BJ (cell line): ENCODE measurements at regions of chr1 and their contacts with region 1.

Region 1: GRCh38 chr1:151085953-151086559 is 15.5 kb downstream of the GABPB2 start:
- DNase-seq: no peak
- H3K4me3 ChIP-seq: no peak overlapping the region
- H3K27me3 ChIP-seq: no peaks in the 10 kb centered on the region
- CTCF ChIP-seq: no peak

Region 2: DNA sequence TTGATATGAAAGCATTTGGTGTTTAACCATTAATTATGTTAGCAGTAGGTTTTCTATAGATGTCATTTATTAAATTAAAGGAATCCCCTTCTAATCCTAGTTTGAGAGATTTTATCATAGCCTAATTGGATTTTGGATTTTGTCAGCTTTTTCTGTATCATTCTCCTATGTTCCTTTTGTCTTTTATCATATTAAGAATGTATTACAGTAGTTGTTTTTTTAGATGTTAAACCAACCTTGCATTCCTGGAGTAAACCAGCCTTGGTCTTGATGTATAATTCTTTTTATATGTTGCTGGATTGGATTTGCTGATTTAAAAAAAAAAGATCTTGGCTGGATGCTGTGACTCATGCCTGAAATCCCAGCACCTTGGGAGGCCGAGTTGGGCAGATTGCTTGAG is 154.3 kb before region 1 on chr1:
- CTCF ChIA-PET with region 1: no interaction called
- POLR2A ChIA-PET with region 1: no interaction called
- DNase-seq: no peak
- H3K4me3 ChIP-seq: no peak overlapping the region
- H3K27me3 ChIP-seq: no peaks in the 10 kb centered on the region
- CTCF ChIP-seq: no peak

Region 3: DNA sequence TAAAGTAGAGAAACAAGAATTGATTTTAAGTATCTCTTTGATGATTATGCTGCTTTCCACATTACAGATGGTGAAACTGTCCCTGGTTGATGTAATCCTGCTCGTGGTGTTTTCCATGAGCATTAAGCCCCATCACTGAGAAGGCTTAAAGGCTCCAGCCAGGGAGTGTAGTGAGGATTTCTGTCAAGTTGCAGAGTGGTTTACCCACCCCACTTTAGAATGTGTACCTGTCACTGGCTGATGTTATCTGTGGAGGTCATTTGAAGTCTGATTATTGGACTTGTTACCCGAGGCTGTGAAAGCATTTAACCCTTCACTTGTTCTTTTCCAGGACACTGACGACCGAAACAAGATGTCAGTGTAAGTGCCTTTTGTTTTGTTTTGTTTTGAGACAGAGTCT is 124.3 kb before region 1 on chr1:
- CTCF ChIA-PET with region 1: no interaction called
- POLR2A ChIA-PET with region 1: no interaction called
- DNase-seq: no peak
- H3K4me3 ChIP-seq: no peak overlapping the region
- H3K27me3 ChIP-seq: no peaks in the 10 kb centered on the region
- CTCF ChIP-seq: no peak

Region 4: DNA sequence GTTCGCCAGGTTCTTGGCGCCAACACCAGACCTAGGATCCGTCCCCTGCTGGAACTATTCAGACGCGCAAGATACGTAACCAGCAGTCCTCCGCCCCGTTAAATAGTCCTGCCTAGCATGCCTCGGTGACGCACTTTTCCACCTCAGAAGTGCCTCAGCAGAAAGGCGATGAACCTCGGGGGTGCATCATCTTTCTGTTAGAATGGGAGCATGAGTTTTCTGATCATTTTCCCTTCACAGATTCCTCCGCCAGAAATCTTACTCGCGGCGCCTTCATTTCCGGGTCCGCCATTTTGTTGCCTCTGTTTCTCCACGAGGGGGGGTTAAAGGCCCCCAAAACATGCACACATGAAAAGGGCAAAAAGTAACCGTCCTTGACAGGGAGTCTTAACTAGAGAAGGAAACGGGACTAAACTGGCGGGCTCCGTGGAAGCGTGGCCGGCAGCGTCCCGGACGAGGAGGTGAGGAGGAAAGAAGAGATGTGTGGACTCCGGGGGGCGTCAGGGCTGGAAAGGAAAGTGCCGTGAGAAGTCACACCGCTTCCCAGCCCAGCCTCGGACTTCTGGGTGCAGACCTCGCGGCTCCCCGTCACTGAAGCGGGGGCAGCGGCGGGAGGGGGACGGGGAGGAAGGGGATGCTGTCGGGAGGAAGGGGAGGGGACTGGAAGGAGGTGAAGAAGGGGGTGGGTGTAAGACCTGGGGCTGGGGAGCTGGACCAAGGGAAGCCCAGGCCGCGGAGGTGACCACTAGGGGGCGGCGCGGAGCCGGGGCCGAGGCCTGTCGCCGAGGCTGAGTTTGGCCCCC is 15.4 kb before region 1 on chr1 and contains the start of gene GABPB2:
- CTCF ChIA-PET with region 1: interaction called, 18 read pairs
- POLR2A ChIA-PET with region 1: no interaction called
- DNase-seq: peak; percentile 69
- H3K4me3 ChIP-seq: peak within 1 kb of the TSS; percentile 94
- H3K27me3 ChIP-seq: no peaks in the 10 kb centered on the region
- CTCF ChIP-seq: peak; percentile 99
- polyA plus RNA-seq, gene GABPB2: 16.2 and 16.7 TPM in 2 replicates